Lower leg skin (tissue), 4 donors: ENCODE measurements at regions of chrX and their contacts with region 1.

Region 1: DNA sequence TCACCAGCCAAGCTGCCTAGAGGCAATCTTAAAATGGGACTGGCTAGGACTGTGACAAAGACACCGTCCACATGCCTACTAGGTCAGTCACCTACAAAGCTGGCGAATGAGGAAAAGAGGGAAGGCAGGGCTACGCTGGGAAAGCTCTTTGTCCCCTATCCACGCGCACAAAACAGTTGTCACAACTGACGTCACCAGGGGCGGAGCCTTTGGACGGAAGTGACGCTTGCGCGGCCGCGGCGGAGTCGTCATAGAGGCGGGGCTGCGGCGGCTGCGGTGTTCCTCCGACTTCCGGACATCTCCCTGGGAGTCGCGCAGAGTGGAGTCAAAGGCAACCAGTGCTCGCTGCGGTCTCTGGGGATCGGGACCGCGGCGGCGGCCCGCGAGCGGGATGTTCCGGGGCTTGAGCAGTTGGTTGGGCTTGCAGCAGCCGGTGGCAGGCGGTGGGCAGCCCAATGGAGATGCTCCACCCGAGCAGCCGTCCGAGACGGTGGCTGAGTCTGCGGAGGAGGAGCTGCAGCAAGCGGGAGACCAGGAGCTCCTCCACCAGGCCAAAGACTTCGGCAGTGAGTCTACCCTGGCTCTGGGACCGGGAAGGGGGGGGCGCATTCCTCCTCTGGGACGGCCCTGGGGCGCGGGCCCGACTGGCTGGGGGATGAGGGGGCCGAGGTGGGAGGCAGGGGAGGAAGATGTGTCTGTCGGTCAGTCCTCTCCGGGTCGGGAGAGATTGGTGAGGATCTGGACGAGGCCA is at the start of gene SYAP1:
- DNase-seq: peak; percentile 90 to 100
- H3K4me3 ChIP-seq: peak within 1 kb of the TSS; percentile 65
- CTCF ChIP-seq: no peak
- POLR2A ChIP-seq: peak in 1 of 2 donors; percentile 53
- total RNA-seq, gene SYAP1: 16.1 to 18.5 (median 16.6) TPM

Region 2: GRCh38 chrX:15854712-15855567 is 864.6 kb before region 1 on chrX and contains the start of gene AP1S2:
- intact Hi-C with region 1: loop called (anchors 10 kb)
- DNase-seq: peak; percentile 85 to 98
- H3K4me3 ChIP-seq: peak within 1 kb of the TSS; percentile 52
- CTCF ChIP-seq: no peak
- POLR2A ChIP-seq: peak in 1 of 2 donors; percentile 47
- total RNA-seq, gene AP1S2: 18.5 to 43.7 (median 31.4) TPM